Right cardiac atrium (tissue), 5 donors: ENCODE measurements at regions of chr11 and their contacts with region 1.

Region 1: GRCh38 chr11:122215244-122215992 is 99.4 kb upstream of the BLID start:
- DNase-seq: peak; percentile 85 to 95 (median 93)
- ATAC-seq: peak; percentile 97
- H3K4me3 ChIP-seq: no peak overlapping the region
- H3K27ac ChIP-seq: peak overlapping the region; percentile 43
- H3K4me1 ChIP-seq: peaks cover 1% of the 10 kb centered on the region
- H3K27me3 ChIP-seq: no peaks in the 10 kb centered on the region

Region 2: GRCh38 chr11:122354025-122354697 is 138.7 kb after region 1 on chr11:
- intact Hi-C with region 1: loop called in 1 of 4 experiments (anchors 10 kb)
- DNase-seq: no peak
- ATAC-seq: peak; percentile 79 to 87
- H3K4me3 ChIP-seq: no peak overlapping the region
- H3K27ac ChIP-seq: no peak overlapping the region
- H3K4me1 ChIP-seq: peaks cover 1% of the 10 kb centered on the region
- H3K27me3 ChIP-seq: no peaks in the 10 kb centered on the region

Region 3: DNA sequence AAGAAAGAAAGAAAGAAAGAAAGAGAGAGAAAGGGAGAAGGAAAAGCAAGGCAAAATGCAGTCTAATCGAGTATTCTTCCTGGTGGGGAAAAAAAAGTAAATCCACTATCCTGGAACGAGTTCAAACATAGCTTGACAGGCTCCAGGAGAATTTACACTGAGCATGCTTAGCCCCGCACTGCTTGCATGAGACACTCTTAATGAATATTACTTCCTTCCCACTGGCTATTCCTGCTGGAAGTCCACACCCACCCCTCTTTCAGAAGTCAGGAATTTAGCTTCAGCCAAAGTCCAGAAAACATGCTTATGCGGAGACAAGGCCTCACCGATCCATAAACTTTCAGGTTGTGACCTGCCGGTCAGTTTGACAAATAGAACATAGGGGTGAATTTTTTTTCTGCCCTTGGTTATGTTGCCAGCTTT is 152.4 kb after region 1 on chr11:
- intact Hi-C with region 1: loop called in 2 of 4 experiments (anchors 5 to 10 kb)
- DNase-seq: peak; percentile 41 to 75 (median 44)
- ATAC-seq: peak; percentile 89 to 92
- H3K4me3 ChIP-seq: peak overlapping the region; percentile 30
- H3K27ac ChIP-seq: peak overlapping the region; percentile 62
- H3K4me1 ChIP-seq: no peaks in the 10 kb centered on the region
- H3K27me3 ChIP-seq: no peaks in the 10 kb centered on the region

Region 4: DNA sequence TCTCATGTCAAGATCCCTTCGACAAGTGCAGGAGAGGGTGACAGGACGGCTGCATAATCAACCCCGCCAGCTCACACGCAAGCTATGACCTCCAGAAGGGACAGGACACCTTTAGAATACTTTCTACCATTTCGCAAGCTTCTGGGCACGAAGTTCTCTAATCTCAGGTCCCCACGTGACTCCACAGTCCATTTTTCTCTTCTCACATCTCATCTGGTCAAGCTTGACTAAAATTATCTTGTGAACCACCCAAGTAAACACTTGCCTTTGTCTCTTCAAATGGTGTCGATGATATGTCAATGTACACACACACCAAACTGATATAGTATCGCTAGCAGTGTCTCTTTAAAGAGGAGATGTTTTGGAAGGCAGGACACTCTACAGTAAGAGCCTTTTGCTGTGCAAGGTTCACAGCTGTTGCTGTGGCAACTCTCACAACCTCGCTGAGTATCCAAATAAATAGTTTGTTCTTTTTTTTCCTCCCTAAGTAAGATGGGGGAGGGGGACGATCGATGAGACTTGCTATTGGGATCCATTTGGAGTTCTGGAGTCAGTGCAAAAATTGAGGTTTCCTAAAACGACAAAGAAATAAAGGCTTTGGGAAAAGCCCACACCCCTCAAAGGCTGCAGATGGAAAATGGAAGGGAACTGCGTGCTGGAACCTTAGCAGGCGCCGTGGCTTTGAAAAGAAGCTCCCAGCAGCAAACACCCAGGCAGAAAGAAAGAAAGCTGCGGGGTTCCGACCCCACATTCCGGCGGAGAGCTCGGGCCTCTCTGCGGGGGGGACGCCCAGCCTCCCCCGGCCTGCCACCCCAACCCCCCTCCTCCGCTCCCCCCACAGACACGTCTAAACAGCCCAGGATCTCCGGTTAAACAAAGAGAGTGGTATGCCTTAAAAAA is 224.7 kb after region 1 on chr11:
- intact Hi-C with region 1: loop called in 1 of 4 experiments (anchors 10 kb)
- DNase-seq: peak; percentile 64 to 81 (median 77)
- ATAC-seq: peak; percentile 90
- H3K4me3 ChIP-seq: peak overlapping the region; percentile 72
- H3K27ac ChIP-seq: peak overlapping the region; percentile 86
- H3K4me1 ChIP-seq: no peaks in the 10 kb centered on the region
- H3K27me3 ChIP-seq: no peaks in the 10 kb centered on the region